IMR-90 (cell line): ENCODE measurements at regions of chr5 and their contacts with region 1.

Region 1: GRCh38 chr5:140639148-140639979 is at the start of gene TMCO6:
- DNase-seq: peak; percentile 89
- ATAC-seq: peak; percentile 99
- H3K4me3 ChIP-seq: peak within 1 kb of the TSS; percentile 70
- H3K27ac ChIP-seq: peak within 1 kb of the TSS; percentile 74
- H3K4me1 ChIP-seq: peaks cover 3% of the 10 kb centered on the region
- H3K27me3 ChIP-seq: no peaks in the 10 kb centered on the region
- CTCF ChIP-seq: peak; percentile 58
- POLR2A ChIP-seq: no peak
- RAD21 ChIP-seq: peak; percentile 44
- total RNA-seq, gene TMCO6: 4.2 and 6.6 TPM in 2 replicates

Region 2: GRCh38 chr5:140372971-140373487 is 266.3 kb before region 1 on chr5:
- CTCF ChIA-PET with region 1: no interaction called
- POLR2A ChIA-PET with region 1: no interaction called
- dilution Hi-C with region 1: no loop called
- in situ Hi-C with region 1: no loop called
- intact Hi-C with region 1: loop called (anchors 2 kb)
- DNase-seq: peak; percentile 69
- ATAC-seq: peak; percentile 99
- H3K4me3 ChIP-seq: no peak overlapping the region
- H3K27ac ChIP-seq: no peak overlapping the region
- H3K4me1 ChIP-seq: no peaks in the 10 kb centered on the region
- H3K27me3 ChIP-seq: peaks cover 2% of the 10 kb centered on the region; the same call in 1 of the 2 replicates
- CTCF ChIP-seq: peak; percentile 65
- POLR2A ChIP-seq: no peak
- RAD21 ChIP-seq: peak; percentile 72

Region 3: GRCh38 chr5:140547508-140548299 is 91.7 kb before region 1 on chr5 and contains the start of gene EIF4EBP3:
- CTCF ChIA-PET with region 1: interaction called, 8 read pairs
- POLR2A ChIA-PET with region 1: no interaction called
- dilution Hi-C with region 1: no loop called
- in situ Hi-C with region 1: no loop called
- intact Hi-C with region 1: loop called (anchors 2 kb)
- DNase-seq: peak; percentile 95
- ATAC-seq: peak; percentile 95
- H3K4me3 ChIP-seq: no peak within 1 kb of the TSS
- H3K27ac ChIP-seq: peak within 1 kb of the TSS; percentile 3
- H3K4me1 ChIP-seq: peaks cover 14% of the 10 kb centered on the region
- H3K27me3 ChIP-seq: no peaks in the 10 kb centered on the region
- CTCF ChIP-seq: peak; percentile 56
- POLR2A ChIP-seq: peak; percentile 79
- RAD21 ChIP-seq: peak; percentile 65
- total RNA-seq, gene EIF4EBP3: 0.28 and 0.36 TPM in 2 replicates

Region 4: GRCh38 chr5:140557136-140557805 is 82.1 kb before region 1 on chr5 and contains the start of gene SRA1:
- CTCF ChIA-PET with region 1: interaction called, 3 read pairs
- POLR2A ChIA-PET with region 1: no interaction called
- dilution Hi-C with region 1: no loop called
- in situ Hi-C with region 1: no loop called
- intact Hi-C with region 1: loop called (anchors 1 kb)
- DNase-seq: peak; percentile 87
- ATAC-seq: peak; percentile 88
- H3K4me3 ChIP-seq: peak within 1 kb of the TSS; percentile 92
- H3K27ac ChIP-seq: peak within 1 kb of the TSS; percentile 96
- H3K4me1 ChIP-seq: peaks cover 16% of the 10 kb centered on the region
- H3K27me3 ChIP-seq: no peaks in the 10 kb centered on the region
- CTCF ChIP-seq: 0 out of 2 replicates have a peak, but pooled peaks have one; percentile 13
- POLR2A ChIP-seq: peak; percentile 99
- RAD21 ChIP-seq: no peak
- total RNA-seq, gene SRA1: 52.9 and 53.9 TPM in 2 replicates

Region 5: DNA sequence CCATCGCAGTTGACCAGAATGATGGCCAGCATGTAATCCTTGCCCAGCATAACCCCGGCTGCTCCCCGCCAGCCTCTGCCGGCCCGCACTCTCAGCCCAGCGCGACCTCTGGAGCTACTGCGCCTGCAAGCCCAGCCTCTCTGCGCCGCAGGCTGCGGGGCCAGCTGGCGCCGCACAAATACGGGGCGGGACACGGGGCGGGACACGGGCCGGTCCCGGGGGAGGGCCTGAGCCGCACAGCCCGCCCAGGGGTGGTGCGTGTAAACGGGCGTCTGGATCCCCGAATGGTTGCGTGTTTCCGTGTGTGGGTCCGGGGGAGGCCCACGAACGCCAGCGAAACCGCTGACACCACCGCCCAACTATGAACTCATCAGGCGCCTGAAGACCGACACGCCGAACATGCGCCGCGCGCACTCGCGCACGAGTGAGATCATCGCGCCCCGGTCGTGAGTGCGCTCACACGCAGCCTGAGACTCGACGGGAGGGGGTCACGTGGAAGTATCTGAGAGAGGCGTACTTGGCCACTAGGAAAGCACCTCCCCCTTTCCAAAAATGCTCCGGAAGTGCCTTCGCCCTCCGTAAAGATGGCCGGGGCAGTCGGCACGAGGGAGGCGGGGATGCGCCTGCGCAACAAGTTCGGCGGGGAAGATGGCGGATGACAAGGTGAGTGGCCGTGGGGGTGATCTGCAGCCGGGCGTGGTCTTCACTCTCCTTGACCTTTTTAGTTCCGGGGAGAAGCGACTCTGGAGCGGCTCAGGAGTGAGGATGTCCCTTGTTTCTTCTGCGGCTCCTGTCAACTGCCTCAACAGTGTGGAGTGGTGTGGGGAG is 75.0 kb before region 1 on chr5 and contains the starts of genes APBB3 and SLC35A4:
- CTCF ChIA-PET with region 1: interaction called, 3 read pairs
- POLR2A ChIA-PET with region 1: interaction called, 4 read pairs
- dilution Hi-C with region 1: no loop called
- in situ Hi-C with region 1: no loop called
- intact Hi-C with region 1: loop called (anchors 1 kb)
- DNase-seq: peak; percentile 99
- ATAC-seq: peak; percentile 92
- H3K4me3 ChIP-seq: peak within 1 kb of the TSS; percentile 82
- H3K27ac ChIP-seq: peak within 1 kb of the TSS; percentile 83
- H3K4me1 ChIP-seq: peaks cover 8% of the 10 kb centered on the region
- H3K27me3 ChIP-seq: no peaks in the 10 kb centered on the region
- CTCF ChIP-seq: no peak
- POLR2A ChIP-seq: peak; percentile 88
- RAD21 ChIP-seq: peak; percentile 16; the same call in 1 of the 2 replicates
- total RNA-seq, gene APBB3: 6.6 and 8.1 TPM in 2 replicates
- total RNA-seq, gene SLC35A4: 17.2 and 19.2 TPM in 2 replicates

Region 6: GRCh38 chr5:140575309-140575708 is 64.1 kb before region 1 on chr5:
- CTCF ChIA-PET with region 1: interaction called, 4 read pairs
- POLR2A ChIA-PET with region 1: no interaction called
- dilution Hi-C with region 1: no loop called
- in situ Hi-C with region 1: no loop called
- intact Hi-C with region 1: loop called (anchors 1 kb)
- DNase-seq: peak; percentile 26
- ATAC-seq: peak; percentile 52; the same call in 1 of the 2 replicates
- H3K4me3 ChIP-seq: no peak overlapping the region
- H3K27ac ChIP-seq: no peak overlapping the region
- H3K4me1 ChIP-seq: peaks cover 5% of the 10 kb centered on the region; the same call in 1 of the 2 replicates
- H3K27me3 ChIP-seq: no peaks in the 10 kb centered on the region
- CTCF ChIP-seq: peak; percentile 45; the same call in 1 of the 2 replicates
- POLR2A ChIP-seq: no peak
- RAD21 ChIP-seq: peak; percentile 48; the same call in 1 of the 2 replicates

Region 7: GRCh38 chr5:140677947-140678346 is 38.6 kb after region 1 on chr5:
- CTCF ChIA-PET with region 1: no interaction called
- POLR2A ChIA-PET with region 1: no interaction called
- dilution Hi-C with region 1: no loop called
- in situ Hi-C with region 1: no loop called
- intact Hi-C with region 1: no loop called
- DNase-seq: no peak
- ATAC-seq: no peak
- H3K4me3 ChIP-seq: no peak overlapping the region
- H3K27ac ChIP-seq: no peak overlapping the region
- H3K4me1 ChIP-seq: no peaks in the 10 kb centered on the region
- H3K27me3 ChIP-seq: no peaks in the 10 kb centered on the region
- CTCF ChIP-seq: no peak
- POLR2A ChIP-seq: no peak
- RAD21 ChIP-seq: no peak

Region 8: DNA sequence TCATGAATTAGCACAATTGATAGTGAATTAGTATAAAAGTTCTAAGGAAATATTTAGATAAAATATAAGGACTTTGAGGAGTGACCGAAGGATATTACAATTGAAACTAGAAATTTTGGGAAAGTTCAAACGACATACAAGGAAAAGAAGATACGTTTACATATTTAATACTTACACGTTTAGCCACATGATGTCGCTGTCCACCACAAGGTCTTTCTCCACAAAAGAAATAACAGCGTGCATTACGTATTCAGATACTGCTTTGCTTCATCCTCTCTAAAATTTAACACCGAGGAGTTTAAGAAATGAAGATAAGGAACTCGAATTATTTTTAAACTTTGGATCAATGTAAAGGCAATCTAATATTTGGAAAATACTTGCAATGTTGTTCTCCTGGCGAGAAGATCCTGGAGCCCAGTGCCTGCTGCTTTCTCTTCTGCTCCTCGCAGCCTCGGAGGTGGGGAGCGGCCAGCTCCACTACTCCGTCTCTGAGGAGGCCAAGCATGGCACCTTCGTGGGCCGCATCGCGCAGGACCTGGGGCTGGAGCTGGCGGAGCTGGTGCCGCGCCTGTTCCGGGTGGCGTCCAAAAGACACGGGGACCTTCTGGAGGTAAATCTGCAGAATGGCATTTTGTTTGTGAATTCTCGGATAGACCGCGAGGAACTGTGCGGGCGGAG is 161.6 kb after region 1 on chr5 and contains the start of gene PCDHA3:
- CTCF ChIA-PET with region 1: no interaction called
- POLR2A ChIA-PET with region 1: no interaction called
- dilution Hi-C with region 1: no loop called
- in situ Hi-C with region 1: no loop called
- intact Hi-C with region 1: no loop called
- DNase-seq: peak; percentile 1
- ATAC-seq: no peak
- H3K4me3 ChIP-seq: peak within 1 kb of the TSS; percentile 36; the same call in 1 of the 2 replicates
- H3K27ac ChIP-seq: no peak within 1 kb of the TSS
- H3K4me1 ChIP-seq: no peaks in the 10 kb centered on the region
- H3K27me3 ChIP-seq: no peaks in the 10 kb centered on the region
- CTCF ChIP-seq: peak; percentile 30
- POLR2A ChIP-seq: no peak
- RAD21 ChIP-seq: no peak
- total RNA-seq, gene PCDHA3: under 0.01 TPM in 2 replicates